ENCODE measurements at regions of chr7 and their contacts with region 1.

Region 1: DNA sequence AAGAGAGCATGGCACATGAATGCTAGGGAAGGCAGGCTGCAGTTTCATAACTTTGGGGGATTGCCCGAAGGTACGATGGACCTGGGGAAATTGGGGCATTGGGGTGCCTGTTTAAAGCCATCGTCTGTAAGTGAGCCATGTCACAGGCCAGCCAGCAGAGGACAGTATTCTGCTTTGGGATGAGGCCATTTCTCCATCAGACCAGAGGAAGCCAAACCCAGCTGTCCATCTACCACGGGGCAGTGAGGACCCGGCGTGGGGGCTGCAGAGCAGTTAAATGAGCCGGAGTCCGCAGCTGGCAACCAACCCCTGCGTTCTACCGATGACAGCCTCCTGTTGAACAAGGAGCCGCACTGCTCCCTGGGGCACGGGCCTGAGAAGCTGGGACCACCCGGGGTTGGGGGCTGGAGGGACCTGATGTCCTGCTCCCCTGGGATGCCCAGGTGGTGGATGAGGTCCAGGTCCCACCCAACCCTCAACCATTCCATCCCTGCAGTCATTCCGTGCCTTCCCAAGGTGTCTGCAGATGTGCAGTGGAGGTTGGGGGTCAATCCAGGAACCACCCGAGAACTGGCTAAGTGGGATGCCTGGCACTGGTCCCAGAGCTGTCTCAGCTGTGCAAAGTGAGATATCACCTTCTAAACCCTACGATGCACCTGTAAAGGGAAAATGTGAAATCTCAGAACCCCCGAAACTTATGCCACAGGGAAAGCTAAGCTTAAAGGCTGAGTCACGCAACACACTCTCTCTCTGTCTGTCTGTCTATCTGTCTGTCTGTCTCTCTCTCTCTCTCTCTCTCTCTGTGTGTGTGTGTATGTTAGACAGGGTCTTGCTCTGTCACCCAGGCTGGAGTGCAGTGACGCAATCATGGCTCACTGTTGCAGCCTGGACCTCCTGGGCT is 12.1 kb upstream of the RHBDD2 start:
- DNase-seq: peak; percentile 66 to 85
- H3K4me3 ChIP-seq: no peak overlapping the region
- H3K27ac ChIP-seq: no peak overlapping the region
- H3K4me1 ChIP-seq: peaks cover 0 to 14% (median 8%) of the 10 kb centered on the region in 4 donors
- H3K27me3 ChIP-seq: no peaks in the 10 kb centered on the region
- CTCF ChIP-seq: peak in 5 of 7 experiments; percentile 84 to 96 (median 90)
- EP300 ChIP-seq: no peak
- POLR2A ChIP-seq: no peak

Region 2: GRCh38 chr7:75018570-75019364 is 848.0 kb before region 1 on chr7:
- intact Hi-C with region 1: no loop called
- DNase-seq: no peak
- H3K4me3 ChIP-seq: no peak overlapping the region
- H3K27ac ChIP-seq: no peak overlapping the region
- H3K4me1 ChIP-seq: no peaks in the 10 kb centered on the region
- H3K27me3 ChIP-seq: no peaks in the 10 kb centered on the region
- CTCF ChIP-seq: no peak
- EP300 ChIP-seq: no peak
- POLR2A ChIP-seq: no peak

Region 3: DNA sequence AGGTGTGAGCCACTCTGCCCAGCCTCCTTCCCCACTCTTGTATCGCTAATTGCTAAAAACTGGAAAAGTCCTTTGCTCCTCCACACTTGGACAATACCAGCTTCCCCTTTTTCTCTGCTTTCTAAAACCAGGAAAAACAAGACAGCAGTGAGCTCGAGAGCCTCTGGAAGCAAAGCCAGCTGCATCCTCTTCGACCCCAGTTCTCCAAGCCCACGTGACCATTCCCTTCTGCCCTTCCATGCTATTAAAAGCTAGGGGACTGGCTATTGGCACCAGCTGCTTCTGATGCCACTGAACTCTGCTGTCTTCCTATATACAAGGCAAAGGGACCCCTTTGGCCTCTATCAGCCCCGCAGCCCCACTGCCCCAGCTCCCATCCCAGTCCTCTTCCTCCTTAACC is 282.4 kb before region 1 on chr7:
- intact Hi-C with region 1: no loop called
- DNase-seq: no peak
- H3K4me3 ChIP-seq: no peak overlapping the region
- H3K27ac ChIP-seq: no peak overlapping the region
- H3K4me1 ChIP-seq: no peaks in the 10 kb centered on the region
- H3K27me3 ChIP-seq: no peaks in the 10 kb centered on the region
- CTCF ChIP-seq: no peak
- EP300 ChIP-seq: no peak
- POLR2A ChIP-seq: no peak

Region 4: GRCh38 chr7:75740846-75741497 is 125.8 kb before region 1 on chr7:
- intact Hi-C with region 1: no loop called
- DNase-seq: peak; percentile 29 to 47
- H3K4me3 ChIP-seq: no peak overlapping the region
- H3K27ac ChIP-seq: peak overlapping the region in 2 of 5 donors; percentile 14 to 31
- H3K4me1 ChIP-seq: peaks cover 6 to 36% (median 24%) of the 10 kb centered on the region in 4 donors
- H3K27me3 ChIP-seq: no peaks in the 10 kb centered on the region
- CTCF ChIP-seq: no peak
- EP300 ChIP-seq: no peak
- POLR2A ChIP-seq: no peak

Region 5: DNA sequence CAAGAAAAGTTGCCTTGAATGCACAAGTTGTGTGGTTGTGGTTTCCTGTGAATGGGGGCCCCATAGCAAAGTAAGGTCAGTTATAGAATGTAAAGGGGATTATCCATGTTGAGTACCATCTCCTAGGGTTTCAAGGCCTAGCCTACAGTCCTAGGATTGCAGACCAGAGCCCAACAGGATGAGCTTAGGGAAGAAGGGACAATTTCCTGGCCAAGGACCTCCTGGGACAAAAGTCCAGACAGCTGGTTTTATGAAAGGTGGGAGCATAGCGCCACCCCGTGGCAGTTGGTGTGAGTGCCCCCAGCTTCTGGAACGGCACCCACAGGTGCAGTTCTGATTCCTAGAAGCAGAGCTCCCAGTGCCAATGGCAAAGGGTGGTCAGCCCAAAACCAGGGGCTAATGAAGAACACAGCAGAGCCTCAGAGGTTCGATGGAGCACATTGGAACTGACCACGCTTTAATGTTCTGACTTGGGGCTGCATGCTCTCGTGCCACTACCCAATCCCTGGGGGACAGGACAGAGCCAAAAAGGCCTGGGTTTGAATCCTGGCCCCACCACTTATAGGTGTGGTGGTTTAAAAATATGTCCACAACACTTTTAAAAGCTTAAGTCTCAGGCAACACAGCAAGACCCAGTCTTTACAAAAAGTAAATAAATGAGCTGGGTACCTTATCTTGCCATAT is 153.4 kb after region 1 on chr7:
- intact Hi-C with region 1: loop called (anchors 5 kb)
- DNase-seq: peak; percentile 82 to 89
- H3K4me3 ChIP-seq: no peak overlapping the region
- H3K27ac ChIP-seq: no peak overlapping the region
- H3K4me1 ChIP-seq: peaks cover 0 to 4% (median 0%) of the 10 kb centered on the region in 4 donors
- H3K27me3 ChIP-seq: no peaks in the 10 kb centered on the region
- CTCF ChIP-seq: peak in 6 of 7 experiments; percentile 21 to 92 (median 88)
- EP300 ChIP-seq: no peak
- POLR2A ChIP-seq: no peak

Region 6: DNA sequence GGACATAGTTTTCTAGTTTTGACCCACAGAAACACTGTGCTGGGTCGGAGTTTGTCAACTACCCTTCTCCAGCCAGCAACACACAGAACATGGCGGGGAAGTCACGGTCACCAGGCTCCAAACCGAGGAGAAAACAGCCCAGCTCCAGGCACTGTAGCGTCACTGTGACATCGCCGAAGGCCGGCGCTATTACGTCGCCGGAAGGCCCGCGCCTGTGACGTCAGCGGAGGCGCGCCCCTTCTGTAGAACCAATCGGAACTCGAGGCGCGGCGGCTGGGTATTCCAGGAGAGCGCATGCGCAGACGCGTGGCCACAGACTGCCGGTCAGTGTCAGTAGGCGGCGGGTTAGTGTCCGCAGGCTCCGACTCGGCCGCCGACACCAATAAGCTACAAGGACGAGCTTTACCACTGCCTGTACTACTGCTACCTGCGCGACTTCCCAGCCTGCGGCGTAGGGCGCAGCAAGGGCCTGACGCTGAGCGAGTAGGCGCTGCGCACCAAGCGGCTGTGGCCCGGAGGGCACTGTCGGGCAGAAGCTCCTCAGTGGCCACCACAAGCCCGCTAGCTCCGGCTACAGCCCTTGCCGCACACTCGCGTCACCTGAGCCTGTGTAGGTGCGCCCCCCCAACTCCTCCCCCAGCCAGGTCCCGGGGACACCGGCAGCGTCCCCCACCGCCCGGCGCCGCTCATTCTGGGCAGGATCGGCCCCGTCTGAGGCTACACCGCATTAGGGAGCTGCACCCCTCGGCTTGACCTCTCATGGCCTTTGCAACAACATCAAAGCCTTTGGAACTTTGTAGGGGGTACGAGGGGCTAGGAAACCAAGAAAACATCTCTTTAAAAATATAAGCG is 299.9 kb after region 1 on chr7:
- intact Hi-C with region 1: no loop called
- DNase-seq: peak; percentile 99
- H3K4me3 ChIP-seq: peak overlapping the region; percentile 53 to 66 (median 62)
- H3K27ac ChIP-seq: peak overlapping the region; percentile 76 to 93 (median 85)
- H3K4me1 ChIP-seq: peaks cover 6 to 10% (median 8%) of the 10 kb centered on the region in 4 donors
- H3K27me3 ChIP-seq: no peaks in the 10 kb centered on the region
- CTCF ChIP-seq: peak in 2 of 7 experiments; percentile 9 to 13
- EP300 ChIP-seq: peak; percentile 62
- POLR2A ChIP-seq: peak in 2 of 4 donors; percentile 46 to 73